Cardiac septum (tissue), 1 donor: ENCODE measurements at regions of chr3 and their contacts with region 1.

Region 1: DNA sequence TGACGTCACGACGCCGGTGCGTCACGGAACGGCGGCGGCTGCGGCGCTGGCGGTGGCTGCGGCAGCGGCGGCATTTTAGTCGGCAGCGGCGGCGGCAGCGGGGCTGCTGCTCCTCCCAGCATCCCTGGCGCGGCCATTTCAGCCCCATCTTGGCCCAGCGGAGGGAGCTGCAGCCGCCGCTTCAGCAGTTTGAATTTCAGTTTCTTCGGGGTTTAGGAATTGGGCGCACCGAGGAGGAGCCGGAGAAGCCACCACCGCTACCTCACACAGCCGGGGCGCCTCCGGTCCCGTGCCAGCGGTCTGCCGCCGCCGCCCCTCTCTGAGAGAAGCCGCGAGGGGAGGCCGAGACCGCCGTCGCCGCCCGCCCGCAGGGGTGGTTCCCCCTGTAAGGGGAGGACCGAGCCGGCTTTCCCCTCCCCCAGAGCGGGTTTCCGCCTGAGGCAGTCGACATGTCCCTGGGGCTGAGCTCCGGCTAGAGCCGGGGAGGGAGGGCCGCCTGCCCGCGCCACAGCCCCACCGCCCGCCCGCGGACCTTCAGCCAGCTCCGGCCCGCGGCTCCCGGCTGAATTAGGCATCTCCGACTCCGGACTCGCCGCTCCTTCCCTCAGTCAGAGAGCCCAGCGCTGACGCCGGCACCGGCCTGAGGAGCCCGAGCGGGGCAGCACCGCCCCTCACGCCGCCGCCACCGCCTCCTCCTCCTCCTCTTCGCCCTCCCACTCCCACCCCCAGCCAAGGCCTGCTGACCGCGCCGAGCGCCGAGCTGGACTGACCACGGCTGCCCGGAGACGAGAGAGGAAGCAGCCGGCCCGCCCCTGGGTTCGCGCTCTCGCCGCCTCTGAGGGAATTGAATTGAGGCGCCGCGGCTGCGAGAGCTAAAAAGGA is at the start of gene TSC22D2:
- DNase-seq: peak; percentile 98
- total RNA-seq, gene TSC22D2: 66.0 TPM

Region 2: GRCh38 chr3:150232992-150233451 is 175.4 kb before region 1 on chr3:
- intact Hi-C with region 1: loop called (anchors 2 kb)
- DNase-seq: peak; percentile 90

Region 3: GRCh38 chr3:150348500-150348899 is 60.0 kb before region 1 on chr3:
- intact Hi-C with region 1: loop called (anchors 2 kb)
- DNase-seq: no peak

Region 4: DNA sequence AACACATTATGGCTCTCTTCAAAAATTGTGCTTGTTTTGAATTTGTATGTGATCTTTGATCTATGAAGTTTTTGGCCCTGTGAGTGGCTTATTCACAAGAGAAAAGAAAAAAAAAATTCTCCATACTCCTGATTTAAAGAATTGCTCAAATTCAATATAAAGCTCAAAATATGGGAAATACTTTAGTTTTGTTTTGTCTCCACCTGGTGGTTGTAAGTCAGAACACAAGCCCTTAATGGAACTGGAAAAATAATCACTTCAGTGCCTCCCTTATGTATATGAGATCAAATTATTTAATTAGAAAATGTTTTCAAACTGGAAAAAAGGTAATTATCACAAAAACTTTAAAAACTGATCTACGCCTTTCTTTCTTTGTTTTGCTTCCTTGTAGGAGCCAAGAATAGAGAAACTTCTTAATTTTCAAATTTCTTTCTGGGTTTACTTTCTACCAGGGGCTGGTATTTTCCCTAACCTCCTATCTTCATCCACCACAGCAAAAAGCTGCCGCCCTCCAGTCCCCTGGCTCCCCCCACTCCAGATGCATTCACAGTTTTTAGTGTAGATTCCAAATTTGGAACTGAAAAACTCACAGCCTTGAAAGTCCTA is 87.2 kb after region 1 on chr3:
- intact Hi-C with region 1: loop called (anchors 1 kb)
- DNase-seq: no peak